Motor neuron (in vitro differentiated cells): ENCODE measurements at regions of chr12 and their contacts with region 1.

Region 1: GRCh38 chr12:122051231-122051876 is 27.2 kb upstream of the MLXIP start:
- ATAC-seq: no peak
- H3K4me3 ChIP-seq: no peak overlapping the region
- H3K27ac ChIP-seq: no peak overlapping the region
- H3K4me1 ChIP-seq: no peaks in the 10 kb centered on the region

Region 2: DNA sequence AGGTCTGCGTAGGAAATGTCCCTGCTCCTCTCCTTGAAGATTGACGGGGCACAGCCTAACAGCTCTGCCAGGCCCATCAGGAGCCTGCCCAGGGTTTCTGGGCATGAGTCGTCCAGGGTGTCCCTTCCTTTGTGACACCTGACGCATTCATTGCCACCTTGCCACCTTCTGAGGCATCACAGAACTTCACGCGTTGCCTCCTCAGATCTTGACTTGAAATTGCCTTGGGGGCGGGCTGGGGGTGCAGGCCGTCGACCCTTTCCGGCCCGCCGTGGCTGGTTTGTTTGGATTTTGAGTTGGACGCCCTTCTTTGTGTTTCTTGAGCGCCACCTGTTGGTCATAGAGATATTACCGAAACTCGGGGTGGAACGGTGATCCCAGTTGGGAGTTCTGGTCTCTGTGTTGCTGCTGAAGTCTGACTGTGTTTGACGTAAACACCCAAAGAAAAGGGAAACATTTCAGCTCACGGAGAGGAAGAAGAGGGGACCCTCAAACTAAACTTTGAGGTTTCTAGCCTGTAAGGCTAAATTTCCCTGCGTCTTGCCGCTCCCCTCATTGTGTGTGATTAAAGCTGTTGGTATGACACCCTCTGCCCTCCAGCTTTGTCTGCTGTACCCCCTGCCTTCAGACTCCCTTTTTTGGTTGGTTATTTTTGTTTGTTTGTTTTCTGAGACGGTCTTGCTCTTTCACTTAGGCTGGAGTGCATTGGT is 71.9 kb after region 1 on chr12:
- in situ Hi-C with region 1: loop called in 1 of 9 experiments (anchors 10 kb)
- ATAC-seq: peak; percentile 51 to 78 (median 64)
- H3K4me3 ChIP-seq: no peak overlapping the region
- H3K27ac ChIP-seq: no peak overlapping the region
- H3K4me1 ChIP-seq: no peaks in the 10 kb centered on the region

Region 3: DNA sequence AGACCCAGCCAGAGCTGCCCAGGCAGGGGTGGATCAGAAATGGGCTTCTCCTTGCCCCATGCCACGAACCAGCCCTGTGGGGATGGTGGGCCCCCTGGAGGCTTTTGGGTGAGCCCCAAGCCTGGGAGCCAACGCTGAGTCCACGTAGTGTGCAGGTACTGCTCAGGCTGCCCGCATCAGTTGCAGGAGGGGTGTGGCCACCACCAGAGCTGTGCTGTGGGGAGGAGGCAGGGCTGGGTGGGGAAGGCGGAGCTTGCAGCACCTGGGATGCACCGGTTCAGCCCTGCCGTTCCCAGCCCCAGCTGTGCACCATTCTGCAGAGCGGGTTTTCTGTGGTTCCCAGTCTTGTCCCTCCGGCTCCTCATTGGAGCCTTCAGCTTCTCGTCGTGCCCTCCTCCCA is 86.3 kb after region 1 on chr12:
- in situ Hi-C with region 1: loop called in 2 of 9 experiments (anchors 10 kb)
- ATAC-seq: peak in 7 of 8 experiments; percentile 57 to 87 (median 81)
- H3K4me3 ChIP-seq: no peak overlapping the region
- H3K27ac ChIP-seq: peak overlapping the region in 1 of 2 donors; percentile 17
- H3K4me1 ChIP-seq: no peaks in the 10 kb centered on the region